Endothelial cell of umbilical vein (primary cell): ENCODE measurements at regions of chr6 and their contacts with region 1.

Region 1: GRCh38 chr6:52517502-52518278 is 59.2 kb downstream of the TRAM2 start:
- DNase-seq: peak; percentile 94
- H3K4me3 ChIP-seq: no peak overlapping the region
- H3K27ac ChIP-seq: peak overlapping the region; percentile 97
- H3K4me1 ChIP-seq: peaks cover 69% of the 10 kb centered on the region
- H3K27me3 ChIP-seq: no peaks in the 10 kb centered on the region
- CTCF ChIP-seq: no peak
- POLR2A ChIP-seq: peak; percentile 27

Region 2: GRCh38 chr6:52491203-52492069 is 26.3 kb before region 1 on chr6:
- CTCF ChIA-PET with region 1: interaction called, 6 read pairs
- POLR2A ChIA-PET with region 1: no interaction called
- dilution Hi-C with region 1: no loop called
- intact Hi-C with region 1: loop called (anchors 1 kb)
- DNase-seq: peak; percentile 44
- H3K4me3 ChIP-seq: no peak overlapping the region
- H3K27ac ChIP-seq: peak overlapping the region; percentile 65
- H3K4me1 ChIP-seq: peaks cover 35% of the 10 kb centered on the region
- H3K27me3 ChIP-seq: no peaks in the 10 kb centered on the region
- CTCF ChIP-seq: no peak
- POLR2A ChIP-seq: no peak

Region 3: GRCh38 chr6:52503848-52504781 is 13.6 kb before region 1 on chr6:
- CTCF ChIA-PET with region 1: interaction called, 4 read pairs
- POLR2A ChIA-PET with region 1: no interaction called
- dilution Hi-C with region 1: no loop called
- intact Hi-C with region 1: loop called (anchors 1 kb)
- DNase-seq: peak; percentile 49
- H3K4me3 ChIP-seq: no peak overlapping the region
- H3K27ac ChIP-seq: peak overlapping the region; percentile 79
- H3K4me1 ChIP-seq: peaks cover 27% of the 10 kb centered on the region
- H3K27me3 ChIP-seq: no peaks in the 10 kb centered on the region
- CTCF ChIP-seq: no peak
- POLR2A ChIP-seq: no peak

Region 4: DNA sequence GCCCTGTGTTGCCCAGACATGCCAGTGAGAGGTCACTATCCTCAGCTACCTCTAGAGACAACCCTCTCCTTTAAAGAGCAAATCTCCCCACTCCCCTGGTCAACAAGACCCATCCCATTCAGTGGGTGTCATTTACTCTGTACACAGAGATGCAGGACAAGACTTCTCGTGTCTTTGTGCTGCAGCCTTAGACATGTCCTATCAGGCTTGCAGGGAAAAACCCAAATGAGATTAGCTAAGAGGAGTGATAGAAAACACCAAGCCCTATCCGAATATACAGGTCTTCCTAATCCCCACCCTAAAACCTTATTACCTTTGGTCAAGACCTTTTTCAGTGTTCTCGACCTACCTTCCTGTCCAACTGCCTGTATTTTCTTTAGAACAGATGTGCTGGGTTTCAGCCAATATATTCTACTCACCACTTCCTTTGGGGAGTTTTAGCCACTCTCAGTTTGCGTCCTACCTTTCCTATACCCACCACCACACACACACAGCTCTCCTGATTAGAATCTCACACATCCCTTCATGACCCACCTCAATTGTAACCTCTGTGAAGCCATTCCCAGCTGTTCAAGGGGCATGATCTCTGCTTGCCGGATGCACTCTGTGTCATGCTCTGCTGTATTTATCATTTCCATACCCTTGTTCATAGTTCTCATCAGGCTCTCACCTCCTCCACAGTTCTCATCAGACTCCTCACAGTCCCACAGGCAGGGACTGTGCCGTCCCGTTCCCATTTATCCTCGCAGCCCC is 19.5 kb after region 1 on chr6:
- CTCF ChIA-PET with region 1: interaction called, 6 read pairs
- POLR2A ChIA-PET with region 1: no interaction called
- dilution Hi-C with region 1: no loop called
- intact Hi-C with region 1: loop called (anchors 1 kb)
- DNase-seq: peak; percentile 78
- H3K4me3 ChIP-seq: no peak overlapping the region
- H3K27ac ChIP-seq: peak overlapping the region; percentile 74
- H3K4me1 ChIP-seq: peaks cover 83% of the 10 kb centered on the region
- H3K27me3 ChIP-seq: no peaks in the 10 kb centered on the region
- CTCF ChIP-seq: no peak
- POLR2A ChIP-seq: peak; percentile 9

Region 5: GRCh38 chr6:52543729-52544601 is 26.3 kb after region 1 on chr6:
- CTCF ChIA-PET with region 1: interaction called, 6 read pairs
- POLR2A ChIA-PET with region 1: interaction called, 7 read pairs
- dilution Hi-C with region 1: no loop called
- intact Hi-C with region 1: loop called (anchors 1 kb)
- DNase-seq: peak; percentile 67
- H3K4me3 ChIP-seq: peak overlapping the region in 1 of 3 experiments; percentile 21
- H3K27ac ChIP-seq: peak overlapping the region; percentile 78
- H3K4me1 ChIP-seq: peaks cover 79% of the 10 kb centered on the region
- H3K27me3 ChIP-seq: no peaks in the 10 kb centered on the region
- CTCF ChIP-seq: no peak
- POLR2A ChIP-seq: peak; percentile 72

Region 6: DNA sequence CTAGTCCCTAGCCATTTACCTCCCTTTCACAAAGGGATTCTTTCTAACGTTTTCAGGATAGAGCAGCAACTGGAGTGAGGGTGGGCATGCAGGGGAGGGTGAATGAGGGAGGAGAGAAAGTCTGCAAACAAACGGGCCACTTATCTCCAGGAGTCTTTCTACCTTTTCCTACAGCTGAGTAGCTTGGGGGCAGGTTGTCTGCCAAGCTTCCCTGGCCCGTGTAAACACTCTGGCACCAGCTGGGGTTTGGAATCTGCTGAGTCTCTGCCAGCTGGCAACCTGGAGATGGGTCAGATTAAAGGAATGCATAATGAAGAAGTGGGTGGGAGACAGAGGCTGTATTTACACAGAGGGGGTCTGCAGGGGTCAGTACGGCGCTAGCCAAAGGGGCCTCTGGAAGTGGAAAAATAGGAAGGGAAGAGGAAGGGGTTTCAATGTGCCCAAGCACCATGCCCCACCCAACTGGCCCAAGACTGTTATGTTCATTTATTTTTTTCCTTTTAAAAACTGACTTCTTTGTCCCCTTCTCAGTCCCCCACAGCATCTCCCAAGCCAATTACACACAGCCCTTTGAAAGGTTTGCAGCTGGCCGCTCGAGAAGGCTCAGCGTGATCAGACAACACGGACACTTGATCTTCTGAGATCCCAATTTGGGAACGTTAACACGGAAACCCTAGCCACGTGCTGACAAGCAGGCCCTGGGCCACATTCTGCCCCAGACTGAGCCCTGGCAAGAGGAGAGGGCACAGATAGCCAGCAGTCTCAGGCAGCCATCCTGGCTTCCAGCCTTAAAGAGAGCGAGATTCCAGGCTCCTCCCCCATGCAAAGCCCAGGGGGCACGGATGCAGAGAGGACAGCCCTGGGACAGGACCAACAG is 33.9 kb after region 1 on chr6:
- CTCF ChIA-PET with region 1: interaction called, 27 read pairs
- POLR2A ChIA-PET with region 1: interaction called, 3 read pairs
- dilution Hi-C with region 1: no loop called
- intact Hi-C with region 1: loop called (anchors 1 kb)
- DNase-seq: peak; percentile 94
- H3K4me3 ChIP-seq: no peak overlapping the region
- H3K27ac ChIP-seq: peak overlapping the region; percentile 82
- H3K4me1 ChIP-seq: peaks cover 60% of the 10 kb centered on the region
- H3K27me3 ChIP-seq: no peaks in the 10 kb centered on the region
- CTCF ChIP-seq: no peak
- POLR2A ChIP-seq: no peak

Region 7: GRCh38 chr6:52568320-52568719 is 50.6 kb after region 1 on chr6:
- CTCF ChIA-PET with region 1: no interaction called
- POLR2A ChIA-PET with region 1: interaction called, 4 read pairs
- dilution Hi-C with region 1: no loop called
- intact Hi-C with region 1: loop called (anchors 1 kb)
- DNase-seq: peak; percentile 94
- H3K4me3 ChIP-seq: peak overlapping the region in 1 of 3 experiments; percentile 6
- H3K27ac ChIP-seq: peak overlapping the region; percentile 76
- H3K4me1 ChIP-seq: peaks cover 75% of the 10 kb centered on the region
- H3K27me3 ChIP-seq: no peaks in the 10 kb centered on the region
- CTCF ChIP-seq: no peak
- POLR2A ChIP-seq: peak; percentile 63